ENCODE measurements at regions of chr4 and their contacts with region 1.

Region 1: GRCh38 chr4:7861440-7861881 is 78.2 kb downstream of the AFAP1 start:
- DNase-seq: peak; percentile 90
- H3K4me3 ChIP-seq: peak overlapping the region in 1 of 3 experiments; percentile 42
- H3K27ac ChIP-seq: peak overlapping the region; percentile 99
- H3K4me1 ChIP-seq: peaks cover 55% of the 10 kb centered on the region
- H3K27me3 ChIP-seq: no peaks in the 10 kb centered on the region
- CTCF ChIP-seq: no peak
- POLR2A ChIP-seq: no peak

Region 2: GRCh38 chr4:7910952-7911578 is 49.6 kb after region 1 on chr4:
- CTCF ChIA-PET with region 1: no interaction called
- POLR2A ChIA-PET with region 1: no interaction called
- dilution Hi-C with region 1: no loop called
- intact Hi-C with region 1: no loop called
- DNase-seq: no peak
- H3K4me3 ChIP-seq: no peak overlapping the region
- H3K27ac ChIP-seq: peak overlapping the region; percentile 49
- H3K4me1 ChIP-seq: peaks cover 64% of the 10 kb centered on the region
- H3K27me3 ChIP-seq: no peaks in the 10 kb centered on the region
- CTCF ChIP-seq: no peak
- POLR2A ChIP-seq: no peak

Region 3: DNA sequence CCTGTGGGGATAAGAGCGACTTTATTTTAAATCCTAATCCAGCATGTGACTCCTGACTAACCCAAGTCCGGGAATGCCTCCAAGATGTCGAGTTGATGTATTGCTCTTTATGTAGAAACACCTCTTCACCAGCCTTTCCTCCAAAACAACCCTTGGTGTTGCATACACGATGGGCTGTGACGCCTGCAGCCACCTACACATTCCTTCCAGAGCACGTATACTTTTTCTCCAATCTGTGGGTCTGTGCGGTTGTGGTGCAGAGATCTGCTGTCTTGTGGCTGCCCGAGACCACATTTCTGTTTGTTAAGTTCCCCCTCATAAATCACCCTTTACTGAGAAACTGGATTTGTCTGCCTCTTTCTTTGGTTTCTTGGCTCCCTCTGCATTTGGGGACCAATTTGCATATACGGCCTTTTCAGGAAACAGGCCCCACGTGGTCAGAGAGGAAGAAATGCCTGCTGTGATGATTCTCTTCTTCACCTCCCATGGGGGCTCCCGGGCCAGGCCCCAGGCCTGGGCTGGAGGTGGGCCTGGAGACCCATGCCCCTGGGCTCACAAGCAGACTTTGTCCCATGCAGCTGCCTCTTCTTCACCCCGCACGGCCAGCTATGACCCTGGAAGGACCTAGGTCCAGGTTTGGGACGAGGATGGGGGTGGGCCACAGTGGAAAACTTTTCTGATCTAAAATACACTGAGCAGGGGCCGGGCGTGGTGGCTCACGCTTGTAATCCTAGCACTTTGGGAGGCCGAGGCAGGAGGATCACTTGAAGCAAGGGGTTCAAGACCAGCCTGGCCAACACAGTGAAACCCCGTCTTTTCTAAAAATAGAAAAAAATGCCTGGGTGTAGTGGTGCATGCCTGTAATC is 99.6 kb after region 1 on chr4:
- CTCF ChIA-PET with region 1: no interaction called
- POLR2A ChIA-PET with region 1: no interaction called
- dilution Hi-C with region 1: no loop called
- intact Hi-C with region 1: loop called (anchors 1 kb)
- DNase-seq: peak; percentile 96
- H3K4me3 ChIP-seq: no peak overlapping the region
- H3K27ac ChIP-seq: peak overlapping the region; percentile 41
- H3K4me1 ChIP-seq: peaks cover 32% of the 10 kb centered on the region
- H3K27me3 ChIP-seq: no peaks in the 10 kb centered on the region
- CTCF ChIP-seq: no peak
- POLR2A ChIP-seq: peak; percentile 38

Region 4: GRCh38 chr4:7967501-7968261 is 106.2 kb after region 1 on chr4:
- CTCF ChIA-PET with region 1: no interaction called
- POLR2A ChIA-PET with region 1: no interaction called
- dilution Hi-C with region 1: no loop called
- intact Hi-C with region 1: loop called (anchors 1 kb)
- DNase-seq: peak; percentile 74
- H3K4me3 ChIP-seq: no peak overlapping the region
- H3K27ac ChIP-seq: peak overlapping the region; percentile 89
- H3K4me1 ChIP-seq: peaks cover 48% of the 10 kb centered on the region
- H3K27me3 ChIP-seq: no peaks in the 10 kb centered on the region
- CTCF ChIP-seq: no peak
- POLR2A ChIP-seq: no peak